Activated B cell treated with CpG ODN at 0.5 μM for 24 hours (primary cell): ENCODE measurements at regions of chr3 and their contacts with region 1.

Region 1: DNA sequence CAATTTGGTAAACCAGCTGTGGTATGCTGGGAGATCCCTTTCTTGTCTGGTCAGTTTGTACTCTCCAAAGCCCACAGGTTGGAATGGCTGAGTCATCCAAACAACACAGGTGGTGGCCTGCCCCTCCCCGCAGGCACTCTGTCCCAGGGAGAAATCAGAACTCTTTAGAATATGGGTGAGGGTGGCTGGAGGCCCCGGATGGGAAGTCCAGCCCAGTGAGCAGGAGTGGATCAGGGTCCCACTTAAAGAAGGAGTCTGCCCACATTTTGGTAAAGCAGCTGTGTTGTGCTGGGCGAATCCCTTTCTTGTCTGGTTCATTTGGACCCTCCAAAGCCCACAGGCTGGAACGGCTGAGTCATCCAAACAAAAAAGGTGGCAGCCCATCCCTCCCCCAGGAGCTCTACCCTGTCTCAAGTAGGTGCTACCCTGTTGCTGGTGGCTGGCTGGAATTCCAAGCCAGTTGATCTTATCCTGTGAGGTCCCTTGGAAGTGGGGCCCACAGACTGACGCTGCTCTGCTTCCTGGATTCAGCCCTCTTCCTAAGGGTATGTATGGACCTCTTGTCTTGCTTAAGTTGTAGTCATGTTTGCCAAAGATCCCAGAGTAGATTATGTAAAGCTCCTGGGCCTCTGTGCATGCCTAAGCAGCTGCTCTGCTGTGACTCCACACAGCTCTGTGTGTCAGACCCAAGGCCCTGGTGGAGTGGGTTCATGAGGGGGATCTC is 44.6 kb downstream of the CCR1 start:
- DNase-seq: no peak
- ATAC-seq: no peak
- H3K4me3 Mint-ChIP-seq: no peak overlapping the region
- H3K27ac Mint-ChIP-seq: no peak overlapping the region
- H3K4me1 Mint-ChIP-seq: no peaks in the 10 kb centered on the region
- H3K27me3 Mint-ChIP-seq: no peaks in the 10 kb centered on the region
- CTCF ChIP-seq: no peak

Region 2: GRCh38 chr3:46143951-46144473 is 19.5 kb before region 1 on chr3:
- CTCF ChIA-PET with region 1: no interaction called
- POLR2A ChIA-PET with region 1: interaction called, 19 read pairs
- intact Hi-C with region 1: no loop called
- DNase-seq: no peak
- ATAC-seq: no peak
- H3K4me3 Mint-ChIP-seq: no peak overlapping the region
- H3K27ac Mint-ChIP-seq: no peak overlapping the region
- H3K4me1 Mint-ChIP-seq: peaks cover 10% of the 10 kb centered on the region
- H3K27me3 Mint-ChIP-seq: no peaks in the 10 kb centered on the region
- CTCF ChIP-seq: no peak